HepG2 (cell line): ENCODE measurements at regions of chr15 and their contacts with region 1.

Region 1: GRCh38 chr15:100918034-100918689 is 995 bp upstream of the LRRK1 start:
- DNase-seq: peak; percentile 8
- ATAC-seq: peak; percentile 99
- H3K4me3 ChIP-seq: no peak overlapping the region
- H3K27ac ChIP-seq: no peak overlapping the region
- H3K4me1 ChIP-seq: no peaks in the 10 kb centered on the region
- H3K27me3 ChIP-seq: peaks cover 3 to 64% of the 10 kb centered on the region in 2 experiments
- CTCF ChIP-seq: peak; percentile 86
- EP300 ChIP-seq: no peak
- POLR2A ChIP-seq: no peak
- RAD21 ChIP-seq: peak; percentile 81

Region 2: GRCh38 chr15:100853676-100854440 is 64.3 kb before region 1 on chr15:
- CTCF ChIA-PET with region 1: no interaction called
- POLR2A ChIA-PET with region 1: no interaction called
- in situ Hi-C with region 1: no loop called
- intact Hi-C with region 1: no loop called
- DNase-seq: no peak
- ATAC-seq: no peak
- H3K4me3 ChIP-seq: no peak overlapping the region
- H3K27ac ChIP-seq: no peak overlapping the region
- H3K4me1 ChIP-seq: no peaks in the 10 kb centered on the region; the same call in none of the 2 replicates
- H3K27me3 ChIP-seq: peaks cover 0 to 7% of the 10 kb centered on the region in 2 experiments; a peak in 2 of 5 replicates
- CTCF ChIP-seq: no peak
- EP300 ChIP-seq: no peak
- POLR2A ChIP-seq: no peak
- RAD21 ChIP-seq: no peak

Region 3: GRCh38 chr15:101008158-101009139 is 90.3 kb after region 1 on chr15:
- CTCF ChIA-PET with region 1: interaction called, 63 read pairs
- POLR2A ChIA-PET with region 1: no interaction called
- in situ Hi-C with region 1: loop called (anchors 5 kb)
- intact Hi-C with region 1: loop called (anchors 1 kb)
- DNase-seq: peak; percentile 64
- ATAC-seq: peak; percentile 90
- H3K4me3 ChIP-seq: peak overlapping the region; percentile 65 to 77 (median 68)
- H3K27ac ChIP-seq: no peak overlapping the region
- H3K4me1 ChIP-seq: peaks cover 18% of the 10 kb centered on the region
- H3K27me3 ChIP-seq: peaks cover 6 to 31% of the 10 kb centered on the region in 2 experiments; a peak in 3 of 5 replicates
- CTCF ChIP-seq: peak; percentile 95
- EP300 ChIP-seq: no peak
- POLR2A ChIP-seq: no peak
- RAD21 ChIP-seq: peak; percentile 38; the same call in 1 of the 2 replicates

Region 4: DNA sequence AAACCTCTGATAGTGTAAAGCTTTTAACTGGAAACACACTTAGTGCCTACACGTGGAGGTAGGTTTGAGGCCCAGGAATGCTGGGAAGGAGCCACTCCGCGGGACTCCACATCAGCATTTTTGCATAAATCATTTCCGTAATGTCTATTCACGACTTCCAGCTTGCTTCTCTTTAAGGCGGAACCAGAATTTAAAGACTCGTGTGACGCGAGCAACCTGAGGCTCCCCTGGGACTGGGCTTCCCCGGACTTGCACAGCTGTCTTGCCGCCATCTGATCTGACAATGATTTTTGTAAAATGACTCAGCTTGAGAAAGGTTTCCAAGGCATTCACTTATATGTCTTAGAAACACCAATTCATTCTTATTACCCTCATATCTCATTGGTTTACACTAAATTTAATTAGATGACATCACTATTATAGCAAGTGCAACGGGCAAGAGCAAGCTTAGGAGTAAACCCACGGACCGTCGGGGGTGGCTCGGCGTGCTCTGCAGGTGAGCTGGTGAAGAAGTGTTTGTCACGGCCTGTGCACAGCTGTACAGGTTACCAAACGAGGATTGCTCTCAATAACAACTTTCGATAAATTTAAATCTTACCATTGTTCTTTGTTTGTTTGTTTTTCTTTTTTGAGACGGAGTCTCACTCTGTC is 238.5 kb after region 1 on chr15:
- CTCF ChIA-PET with region 1: no interaction called
- POLR2A ChIA-PET with region 1: no interaction called
- in situ Hi-C with region 1: no loop called
- intact Hi-C with region 1: no loop called
- DNase-seq: no peak
- ATAC-seq: no peak
- H3K4me3 ChIP-seq: no peak overlapping the region
- H3K27ac ChIP-seq: no peak overlapping the region
- H3K4me1 ChIP-seq: no peaks in the 10 kb centered on the region
- H3K27me3 ChIP-seq: peaks cover 0 to 6% of the 10 kb centered on the region in 2 experiments; a peak in 1 of 5 replicates
- CTCF ChIP-seq: no peak
- EP300 ChIP-seq: no peak
- POLR2A ChIP-seq: no peak
- RAD21 ChIP-seq: no peak

Region 5: DNA sequence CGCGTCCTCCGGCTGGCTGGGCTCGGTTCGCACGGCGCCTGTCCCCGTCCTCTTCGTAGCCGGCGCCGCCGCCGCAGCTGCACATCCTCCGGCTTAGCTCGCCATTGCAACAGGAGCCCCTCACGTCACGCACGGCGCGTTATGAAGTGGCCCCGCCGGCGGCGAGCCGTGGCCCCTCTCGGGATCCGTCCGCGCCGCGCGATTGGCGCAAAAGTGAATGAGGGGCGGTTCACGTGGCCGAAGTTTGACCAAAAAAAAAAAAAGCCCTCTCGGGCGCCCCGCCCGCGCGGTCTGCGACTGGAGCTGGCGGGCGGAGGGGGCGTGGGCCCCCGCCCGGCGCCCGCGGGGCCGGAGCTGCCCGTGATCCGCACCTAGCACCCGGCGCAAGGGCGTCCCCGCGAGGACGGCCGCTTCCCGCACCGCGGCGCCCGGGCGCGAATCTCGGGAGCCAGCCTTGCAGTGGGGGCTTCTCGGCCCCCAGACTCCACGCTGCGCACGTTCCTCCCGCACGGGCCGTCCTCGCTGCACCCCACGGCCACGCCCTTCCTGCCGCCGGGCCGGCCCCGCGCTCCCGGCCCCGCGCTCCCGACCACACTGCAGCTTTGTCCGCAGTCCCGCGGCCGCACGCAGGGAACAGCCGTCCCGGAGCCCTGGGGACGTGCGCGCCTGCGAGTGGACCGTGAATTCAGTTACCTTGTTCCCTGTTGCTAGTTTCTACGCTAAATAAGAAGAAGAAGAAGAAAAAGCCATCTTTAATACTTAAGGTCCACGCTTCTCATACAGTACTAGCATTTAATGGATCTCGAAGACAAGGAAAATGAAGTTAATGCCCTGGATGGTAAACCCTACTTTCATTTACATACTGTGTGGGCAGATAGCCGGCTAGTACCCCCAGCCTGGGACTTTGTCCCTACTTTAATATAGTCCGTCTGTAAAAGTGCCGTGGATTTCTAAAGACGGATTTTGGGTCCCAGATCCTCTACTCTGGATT is 334.0 kb after region 1 on chr15 and contains the start of gene CHSY1:
- CTCF ChIA-PET with region 1: no interaction called
- POLR2A ChIA-PET with region 1: no interaction called
- in situ Hi-C with region 1: loop called (anchors 25 kb)
- intact Hi-C with region 1: loop called (anchors 10 kb)
- DNase-seq: peak; percentile 67
- ATAC-seq: peak; percentile 73
- H3K4me3 ChIP-seq: peak within 1 kb of the TSS; percentile 77 to 82 (median 81)
- H3K27ac ChIP-seq: peak within 1 kb of the TSS; percentile 52
- H3K4me1 ChIP-seq: peaks cover 62% of the 10 kb centered on the region
- H3K27me3 ChIP-seq: no peaks in the 10 kb centered on the region
- CTCF ChIP-seq: 0 out of 2 replicates have a peak, but pooled peaks have one; percentile 28
- EP300 ChIP-seq: no peak
- POLR2A ChIP-seq: peak; percentile 35 to 80; a peak in 3 of 4 replicates
- RAD21 ChIP-seq: peak; percentile 19
- total RNA-seq, gene CHSY1: 12.8 and 13.7 TPM in 2 replicates